ENCODE measurements at regions of chr19 and their contacts with region 1.

Region 1: GRCh38 chr19:6297202-6297601 is 17.4 kb upstream of the MLLT1 start:
- DNase-seq: no peak
- ATAC-seq: no peak

Region 2: DNA sequence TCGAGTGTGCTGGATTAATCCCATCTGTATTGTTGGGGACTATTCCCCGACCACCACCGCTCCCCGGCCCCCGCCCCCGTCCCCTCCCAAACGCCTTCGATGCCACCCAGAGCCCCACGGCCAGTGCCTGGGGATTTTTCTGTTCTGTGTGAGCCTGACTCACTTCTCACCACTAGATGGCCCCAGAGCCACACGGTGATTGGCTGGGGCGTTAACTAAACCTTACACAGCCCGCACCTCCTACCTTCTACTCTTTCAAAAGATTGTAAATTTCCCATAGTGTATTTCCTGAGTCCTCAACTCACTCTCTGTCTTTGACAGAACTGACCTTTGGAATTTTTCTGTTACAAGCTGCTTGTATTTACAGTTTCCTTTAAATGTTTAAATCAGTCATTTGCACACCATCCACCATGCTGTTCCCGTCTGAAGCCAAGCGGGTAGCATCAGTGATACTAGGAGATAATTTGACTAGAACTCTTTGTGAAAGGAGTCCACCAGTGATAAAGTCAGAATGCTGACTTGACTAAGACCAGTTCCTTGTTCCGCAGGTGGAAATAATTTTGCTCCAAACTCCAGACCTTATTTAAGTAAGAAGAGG is 248.3 kb before region 1 on chr19:
- intact Hi-C with region 1: loop called (anchors 2 kb)
- DNase-seq: peak; percentile 88
- ATAC-seq: peak; percentile 97

Region 3: GRCh38 chr19:6224302-6224663 is 72.9 kb before region 1 on chr19:
- intact Hi-C with region 1: no loop called
- DNase-seq: peak; percentile 58
- ATAC-seq: peak; percentile 32

Measured in Right ventricle myocardium inferior (tissue), 1 donor.